ENCODE measurements at regions of chr4 and their contacts with region 1.

Region 1: DNA sequence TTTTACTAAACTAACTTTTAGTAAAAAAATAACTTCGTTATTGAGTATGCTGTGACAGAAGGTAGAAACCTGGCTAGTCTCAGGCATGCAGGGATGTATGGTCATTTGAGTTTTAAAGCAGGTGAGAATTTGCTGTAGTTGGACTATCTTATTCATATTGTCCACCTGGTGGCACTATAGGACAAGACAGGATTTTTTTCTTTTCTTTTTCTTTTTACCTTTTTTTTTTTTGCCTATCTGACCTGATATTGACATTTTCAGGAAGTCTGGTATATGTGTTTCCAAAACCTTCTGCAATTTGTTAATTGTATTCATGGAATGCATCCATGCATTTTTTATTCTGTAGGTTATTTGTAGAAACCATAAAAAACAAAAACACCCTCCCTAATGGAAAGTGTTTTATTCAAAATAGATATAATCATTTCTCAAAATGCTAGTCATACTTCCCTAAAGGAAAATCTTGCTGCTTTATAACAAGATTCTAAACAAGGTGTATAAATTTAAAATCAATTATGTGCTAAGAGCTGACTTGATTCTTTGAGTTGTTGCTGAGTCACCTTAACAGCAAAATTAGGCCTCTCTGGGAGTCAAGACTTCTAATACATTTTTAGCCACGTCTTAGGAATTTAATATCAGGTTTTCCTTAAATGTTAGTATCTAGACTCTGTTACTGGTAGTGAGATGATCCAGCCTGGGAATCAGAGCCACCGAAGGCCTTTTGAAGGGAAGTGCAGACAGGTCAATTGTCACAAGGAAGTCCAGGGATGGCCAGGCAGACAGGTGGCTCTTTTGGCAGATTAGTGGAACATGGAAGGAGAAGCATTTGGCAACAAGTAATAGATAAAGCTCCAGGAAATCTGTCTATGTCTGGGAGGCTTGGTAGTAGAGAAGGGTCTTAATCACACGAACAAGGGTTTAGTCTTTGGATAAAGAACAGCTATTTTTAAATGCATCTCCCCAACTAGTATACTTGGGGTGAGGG is 201.3 kb upstream of the GNPDA2 start:
- DNase-seq: peak; percentile 33
- H3K4me3 ChIP-seq: no peak overlapping the region
- H3K27ac ChIP-seq: no peak overlapping the region
- H3K4me1 ChIP-seq: no peaks in the 10 kb centered on the region
- CTCF ChIP-seq: peak; percentile 77

Region 2: GRCh38 chr4:44965435-44966095 is 37.9 kb after region 1 on chr4:
- CTCF ChIA-PET with region 1: no interaction called
- POLR2A ChIA-PET with region 1: no interaction called
- intact Hi-C with region 1: no loop called
- DNase-seq: no peak
- H3K4me3 ChIP-seq: no peak overlapping the region
- H3K27ac ChIP-seq: no peak overlapping the region
- H3K4me1 ChIP-seq: no peaks in the 10 kb centered on the region
- CTCF ChIP-seq: no peak

Region 3: GRCh38 chr4:45732161-45732560 is 804.5 kb after region 1 on chr4:
- CTCF ChIA-PET with region 1: no interaction called
- POLR2A ChIA-PET with region 1: no interaction called
- intact Hi-C with region 1: no loop called
- DNase-seq: no peak
- H3K4me3 ChIP-seq: no peak overlapping the region
- H3K27ac ChIP-seq: no peak overlapping the region
- H3K4me1 ChIP-seq: no peaks in the 10 kb centered on the region
- CTCF ChIP-seq: no peak

Region 4: GRCh38 chr4:46270986-46271596 is 1343.4 kb after region 1 on chr4:
- CTCF ChIA-PET with region 1: no interaction called
- POLR2A ChIA-PET with region 1: no interaction called
- intact Hi-C with region 1: loop called (anchors 5 kb)
- DNase-seq: peak; percentile 19
- H3K4me3 ChIP-seq: no peak overlapping the region
- H3K27ac ChIP-seq: no peak overlapping the region
- H3K4me1 ChIP-seq: no peaks in the 10 kb centered on the region
- CTCF ChIP-seq: peak; percentile 70

Measured in OCI-LY7 (cell line).